ENCODE measurements at regions of chr14 and their contacts with region 1.

Region 1: DNA sequence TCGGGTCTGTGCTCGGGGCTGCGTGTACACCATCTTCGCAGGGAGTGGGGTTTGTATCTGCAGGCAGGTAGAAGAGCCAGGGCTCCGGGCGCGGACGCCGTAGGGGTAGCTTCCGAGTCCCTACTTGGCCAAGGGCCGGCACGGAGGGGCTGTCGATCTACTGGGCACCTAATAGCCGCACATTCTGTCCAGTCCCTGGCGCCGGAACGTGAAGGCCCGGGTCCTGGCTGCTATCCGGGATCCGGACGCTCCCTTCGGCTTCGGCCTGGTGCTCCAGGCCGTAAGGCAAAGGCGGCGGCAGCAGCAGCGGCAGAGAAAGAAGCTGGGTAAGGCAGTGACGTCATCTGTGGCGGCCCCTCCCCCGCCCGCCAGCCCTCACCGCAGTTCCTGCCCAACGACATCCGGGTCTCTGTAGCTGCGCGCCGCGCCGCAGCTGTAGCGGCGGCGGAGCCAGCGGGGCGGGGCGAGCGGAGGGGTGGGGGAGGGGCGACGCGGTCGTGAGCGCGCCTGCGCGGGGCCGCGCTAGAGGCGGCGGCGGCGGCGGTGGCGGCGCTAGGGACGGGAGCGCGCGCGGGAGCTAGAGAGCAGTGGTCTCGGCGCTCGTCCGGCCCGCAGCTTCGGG is at the start of gene PPM1A:
- DNase-seq: peak; percentile 96 to 98 (median 97)
- ATAC-seq: peak; percentile 91 to 95 (median 94)
- H3K4me3 ChIP-seq: peak within 1 kb of the TSS; percentile 65 to 94 (median 84)
- H3K27ac ChIP-seq: peak within 1 kb of the TSS; percentile 93 to 100 (median 100)
- H3K4me1 ChIP-seq: peaks cover 2 to 54% (median 36%) of the 10 kb centered on the region in 12 donors
- H3K27me3 ChIP-seq: no peaks in the 10 kb centered on the region
- CTCF ChIP-seq: no peak
- POLR2A ChIP-seq: peak; percentile 39 to 82
- total RNA-seq, gene PPM1A: 60.7 to 126 (median 95.1) TPM

Region 2: GRCh38 chr14:60079724-60080123 is 169.1 kb before region 1 on chr14:
- intact Hi-C with region 1: loop called in 1 of 10 experiments (anchors 10 kb)
- DNase-seq: no peak
- ATAC-seq: no peak
- H3K4me3 ChIP-seq: no peak overlapping the region
- H3K27ac ChIP-seq: no peak overlapping the region
- H3K4me1 ChIP-seq: no peaks in the 10 kb centered on the region
- H3K27me3 ChIP-seq: no peaks in the 10 kb centered on the region
- CTCF ChIP-seq: no peak
- POLR2A ChIP-seq: no peak

Region 3: DNA sequence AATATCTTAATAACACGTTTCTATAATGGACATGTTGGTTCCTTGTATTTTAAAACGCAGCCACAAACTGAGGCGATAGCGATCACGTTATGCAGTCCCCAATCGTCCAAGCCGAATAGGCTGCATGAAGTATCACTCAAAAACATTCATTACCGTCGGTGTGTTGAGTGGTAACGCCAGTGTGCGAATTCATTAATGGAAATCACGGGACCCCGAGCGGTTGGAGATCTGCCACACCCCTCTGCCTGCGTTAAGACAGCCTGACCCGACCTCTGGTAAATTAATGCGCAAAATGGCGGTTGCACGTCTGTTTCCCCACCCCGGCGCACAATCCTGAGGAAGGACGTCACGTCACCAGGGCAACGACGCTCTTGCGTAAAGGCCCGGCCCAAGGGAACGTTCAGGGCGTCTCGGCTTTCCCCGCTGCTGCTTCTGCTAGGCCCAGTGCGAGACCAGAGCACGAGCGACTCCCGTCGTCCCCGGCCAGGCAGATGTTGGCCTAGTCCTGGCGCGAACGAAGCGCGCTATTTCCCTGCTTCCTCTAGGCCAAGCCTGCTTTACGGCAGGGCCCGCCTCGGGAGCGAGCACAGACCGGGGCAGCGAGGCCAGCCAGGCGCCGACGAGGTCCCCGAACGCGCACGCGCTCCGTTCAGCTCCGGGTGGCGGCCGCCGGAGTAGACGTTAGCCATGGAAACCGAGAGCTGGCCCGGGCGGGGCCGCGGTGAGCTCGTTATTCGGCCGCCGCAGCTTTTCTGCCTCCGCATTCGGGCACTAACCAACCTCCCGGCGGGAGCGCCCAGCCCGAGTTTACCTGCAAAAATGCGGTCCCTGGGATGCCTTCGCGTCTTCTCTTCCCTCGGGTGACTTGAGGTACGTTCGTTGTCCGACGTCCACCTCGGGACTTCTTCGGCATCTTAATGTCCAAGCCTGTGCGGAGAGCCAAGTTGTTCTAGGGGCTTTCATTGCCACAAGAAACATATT is 157.0 kb before region 1 on chr14 and contains the start of gene PCNX4:
- intact Hi-C with region 1: loop called in 5 of 10 experiments (anchors 1 to 10 kb)
- DNase-seq: peak; percentile 97 to 98 (median 98)
- ATAC-seq: peak; percentile 95 to 99 (median 98)
- H3K4me3 ChIP-seq: peak within 1 kb of the TSS; percentile 50 to 90 (median 74)
- H3K27ac ChIP-seq: peak within 1 kb of the TSS; percentile 91 to 99 (median 98)
- H3K4me1 ChIP-seq: peaks cover 0 to 54% (median 31%) of the 10 kb centered on the region in 12 donors
- H3K27me3 ChIP-seq: no peaks in the 10 kb centered on the region
- CTCF ChIP-seq: peak in 2 of 12 donors; percentile 7 to 14
- POLR2A ChIP-seq: peak; percentile 32 to 95
- total RNA-seq, gene PCNX4: 22.1 to 56.2 (median 37.3) TPM

Region 4: DNA sequence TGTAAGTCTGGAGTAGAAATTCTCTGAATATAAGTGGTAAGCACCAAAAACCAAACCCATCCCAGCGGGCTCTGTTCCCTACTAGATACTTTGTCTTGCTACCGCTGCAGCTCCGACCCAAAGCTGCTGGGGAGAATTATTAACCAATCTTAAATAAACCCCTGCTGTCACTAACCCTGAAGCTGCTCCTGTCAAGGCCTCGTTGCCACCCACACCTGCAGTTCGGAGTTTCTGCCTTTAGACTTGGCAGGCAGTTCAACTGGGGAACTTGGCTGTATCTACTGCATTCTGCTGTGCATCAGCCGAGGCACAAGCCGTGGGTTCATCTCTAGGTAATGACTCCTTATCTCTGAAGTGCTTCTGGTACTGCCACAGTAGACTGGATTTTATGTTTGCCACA is 55.7 kb after region 1 on chr14:
- intact Hi-C with region 1: loop called in 1 of 10 experiments (anchors 5 kb)
- DNase-seq: peak in 3 of 5 donors; percentile 29 to 69 (median 44)
- ATAC-seq: peak; percentile 66 to 76 (median 73)
- H3K4me3 ChIP-seq: no peak overlapping the region
- H3K27ac ChIP-seq: peak overlapping the region in 8 of 12 donors; percentile 23 to 70 (median 40)
- H3K4me1 ChIP-seq: peaks cover 0 to 39% (median 16%) of the 10 kb centered on the region in 12 donors
- H3K27me3 ChIP-seq: no peaks in the 10 kb centered on the region
- CTCF ChIP-seq: no peak
- POLR2A ChIP-seq: no peak

Region 5: DNA sequence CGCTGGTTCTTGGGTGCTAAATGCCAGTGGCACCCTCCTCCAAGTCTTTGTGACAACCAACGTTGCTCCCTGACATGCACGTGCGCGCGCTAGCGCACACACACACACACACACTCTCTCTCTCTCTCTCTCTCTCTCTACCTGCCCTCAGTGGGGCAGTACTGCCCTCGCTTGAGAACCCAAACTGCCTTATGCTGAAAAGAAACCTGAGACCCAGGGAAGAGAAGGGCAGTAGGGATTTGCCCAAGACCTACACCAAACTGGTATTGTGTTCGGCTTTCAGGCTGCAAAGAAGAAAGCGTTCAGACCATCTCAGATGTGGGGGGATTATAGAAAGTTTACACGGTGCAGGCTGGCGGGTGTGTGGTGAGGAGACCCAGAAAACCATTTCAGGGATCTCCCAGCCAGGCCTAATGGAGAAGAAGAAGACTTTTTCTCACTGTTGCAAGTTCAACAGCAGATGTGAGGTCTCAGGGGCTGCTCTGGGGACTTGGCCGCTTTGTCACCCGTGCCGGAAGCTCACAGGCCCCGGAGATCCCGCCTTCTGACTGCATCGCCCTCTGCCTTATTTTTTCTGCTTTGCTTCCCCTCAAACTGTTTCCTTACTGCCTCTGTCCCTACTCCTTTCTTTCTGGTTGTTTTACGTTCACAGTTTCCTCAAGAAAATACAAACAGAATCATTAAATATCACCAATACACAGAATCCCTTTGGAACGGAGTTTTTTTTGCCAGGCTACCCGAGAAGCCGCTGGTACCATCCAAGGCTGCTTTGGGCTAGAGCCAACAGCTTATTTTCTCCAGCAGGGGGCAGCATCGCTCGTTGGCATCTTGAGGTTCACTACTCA is 82.6 kb after region 1 on chr14:
- intact Hi-C with region 1: loop called in 1 of 10 experiments (anchors 5 kb)
- DNase-seq: peak; percentile 37 to 65 (median 50)
- ATAC-seq: peak; percentile 35 to 77 (median 72)
- H3K4me3 ChIP-seq: peak overlapping the region in 11 of 12 donors; percentile 7 to 62 (median 48)
- H3K27ac ChIP-seq: peak overlapping the region in 4 of 12 donors; percentile 6 to 45 (median 24)
- H3K4me1 ChIP-seq: peaks cover 0 to 24% (median 7%) of the 10 kb centered on the region in 12 donors
- H3K27me3 ChIP-seq: peaks cover 0 to 21% (median 6%) of the 10 kb centered on the region in 9 donors
- CTCF ChIP-seq: peak; percentile 55 to 79 (median 72)
- POLR2A ChIP-seq: no peak